Lower leg skin (tissue), 4 donors: ENCODE measurements at regions of chr3 and their contacts with region 1.

Region 1: GRCh38 chr3:62815981-62816380 is 59.2 kb downstream of the CADPS start:
- DNase-seq: no peak
- H3K4me3 ChIP-seq: no peak overlapping the region
- CTCF ChIP-seq: no peak
- POLR2A ChIP-seq: no peak

Region 2: GRCh38 chr3:62785387-62785982 is 30.5 kb before region 1 on chr3:
- intact Hi-C with region 1: loop called (anchors 1 kb)
- DNase-seq: no peak
- H3K4me3 ChIP-seq: no peak overlapping the region
- CTCF ChIP-seq: no peak
- POLR2A ChIP-seq: no peak

Region 3: GRCh38 chr3:62990704-62991413 is 174.9 kb after region 1 on chr3:
- intact Hi-C with region 1: no loop called
- DNase-seq: no peak
- H3K4me3 ChIP-seq: no peak overlapping the region
- CTCF ChIP-seq: no peak
- POLR2A ChIP-seq: no peak